Activated T-helper 2 cell treated with anti-CD3 and anti-CD28 coated beads, Interferon-gamma antibody, Interleukin-2, Interleukin-4, amounts not matched to agents 10 μg/mL and 5 μg/mL and 100 μg/mL, durations not matched to agents 14 hours and 24 hours and 36 hours (primary cell): ENCODE measurements at regions of chr3 and their contacts with region 1.

Region 1: GRCh38 chr3:114056130-114057010 is at the starts of genes CCDC191 and QTRT2:
- DNase-seq: peak; percentile 98
- H3K4me3 Mint-ChIP-seq: peak within 1 kb of the TSS; percentile 91
- H3K27ac Mint-ChIP-seq: peak within 1 kb of the TSS; percentile 89
- H3K4me1 Mint-ChIP-seq: peaks cover 22% of the 10 kb centered on the region
- H3K27me3 Mint-ChIP-seq: no peaks in the 10 kb centered on the region
- total RNA-seq, gene CCDC191: 0.68 and 0.76 TPM in 2 replicates
- total RNA-seq, gene QTRT2: 40.2 and 41.3 TPM in 2 replicates

Region 2: GRCh38 chr3:113514265-113514769 is 542.1 kb before region 1 on chr3:
- intact Hi-C with region 1: loop called (anchors 1 kb)
- DNase-seq: no peak
- H3K4me3 Mint-ChIP-seq: no peak overlapping the region
- H3K27ac Mint-ChIP-seq: no peak overlapping the region
- H3K4me1 Mint-ChIP-seq: peaks cover 7% of the 10 kb centered on the region
- H3K27me3 Mint-ChIP-seq: peaks cover 19% of the 10 kb centered on the region

Region 3: GRCh38 chr3:113745273-113746068 is 310.9 kb before region 1 on chr3:
- intact Hi-C with region 1: loop called (anchors 1 kb)
- DNase-seq: peak; percentile 73
- H3K4me3 Mint-ChIP-seq: peak overlapping the region; percentile 96
- H3K27ac Mint-ChIP-seq: peak overlapping the region; percentile 100
- H3K4me1 Mint-ChIP-seq: peaks cover 64% of the 10 kb centered on the region
- H3K27me3 Mint-ChIP-seq: peaks cover 3% of the 10 kb centered on the region

Region 4: DNA sequence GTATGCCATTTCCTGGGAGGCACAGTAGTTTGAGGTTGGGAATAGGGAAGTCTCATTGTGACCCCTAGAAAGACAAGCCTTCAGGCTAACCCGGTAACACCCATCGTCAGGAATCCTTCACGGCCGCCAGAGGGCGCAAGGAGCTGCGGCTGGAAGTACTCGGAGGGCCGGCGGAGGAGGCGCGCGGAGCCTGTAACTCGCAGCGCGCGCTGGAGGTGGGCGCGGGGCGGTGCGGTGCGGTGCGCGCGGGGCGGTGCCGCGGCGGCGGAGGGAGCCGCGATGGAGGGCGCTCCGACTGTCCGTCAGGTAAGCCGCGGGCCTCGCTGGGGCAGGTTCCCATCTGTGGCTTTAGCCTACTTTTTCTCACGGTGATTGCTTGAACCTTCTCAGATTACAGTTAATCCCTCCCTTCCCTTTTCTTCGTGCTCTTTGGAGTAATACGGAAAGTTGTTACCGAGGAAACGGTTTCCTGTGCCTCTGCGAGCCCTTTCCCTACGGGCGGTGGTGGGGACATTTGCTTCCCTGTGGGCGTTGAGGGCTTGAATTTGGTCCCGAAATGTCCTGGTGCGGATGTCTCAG is 217.7 kb before region 1 on chr3 and contains the start of gene GRAMD1C:
- intact Hi-C with region 1: loop called (anchors 2 kb)
- DNase-seq: peak; percentile 77
- H3K4me3 Mint-ChIP-seq: peak within 1 kb of the TSS; percentile 76
- H3K27ac Mint-ChIP-seq: no peak within 1 kb of the TSS
- H3K4me1 Mint-ChIP-seq: peaks cover 8% of the 10 kb centered on the region
- H3K27me3 Mint-ChIP-seq: peaks cover 5% of the 10 kb centered on the region
- total RNA-seq, gene GRAMD1C: 0.37 and 0.87 TPM in 2 replicates

Region 5: DNA sequence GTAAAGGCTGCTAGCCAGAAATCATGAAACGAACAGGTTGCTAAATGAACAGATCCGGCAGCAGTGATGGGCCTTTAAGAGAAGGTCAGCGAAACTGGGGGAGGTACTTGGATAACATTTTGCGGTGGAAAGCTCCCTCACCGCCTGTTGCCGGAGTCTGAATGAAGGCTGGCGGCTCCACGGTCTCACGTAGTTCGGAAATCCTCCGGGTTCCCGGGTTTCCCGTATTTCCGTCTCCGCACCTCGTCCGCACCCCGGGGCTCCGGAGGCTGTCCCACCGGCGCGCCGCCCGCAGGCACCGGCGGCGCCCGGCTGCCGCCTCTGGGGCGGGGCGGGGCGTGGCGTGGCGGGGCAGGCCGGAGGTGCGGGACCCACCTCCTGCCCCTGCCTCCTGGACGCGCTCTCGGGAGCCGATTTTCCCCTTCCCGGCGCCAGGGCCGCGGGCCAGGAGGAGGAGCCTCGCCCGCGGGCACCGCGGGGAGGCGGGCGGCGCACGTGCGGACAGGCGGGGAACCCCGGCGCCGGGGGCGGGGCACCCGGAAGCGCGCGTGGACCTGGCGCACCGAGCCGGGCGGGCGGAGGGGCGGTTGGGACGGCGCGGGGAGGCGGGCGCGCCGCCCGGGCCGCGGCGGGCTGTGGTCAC is 108.9 kb before region 1 on chr3 and contains the start of gene ZDHHC23:
- intact Hi-C with region 1: loop called (anchors 2 kb)
- DNase-seq: peak; percentile 64
- H3K4me3 Mint-ChIP-seq: peak within 1 kb of the TSS; percentile 75
- H3K27ac Mint-ChIP-seq: peak within 1 kb of the TSS; percentile 61
- H3K4me1 Mint-ChIP-seq: peaks cover 7% of the 10 kb centered on the region
- H3K27me3 Mint-ChIP-seq: peaks cover 53% of the 10 kb centered on the region
- total RNA-seq, gene ZDHHC23: 2.6 and 2.9 TPM in 2 replicates

Region 6: DNA sequence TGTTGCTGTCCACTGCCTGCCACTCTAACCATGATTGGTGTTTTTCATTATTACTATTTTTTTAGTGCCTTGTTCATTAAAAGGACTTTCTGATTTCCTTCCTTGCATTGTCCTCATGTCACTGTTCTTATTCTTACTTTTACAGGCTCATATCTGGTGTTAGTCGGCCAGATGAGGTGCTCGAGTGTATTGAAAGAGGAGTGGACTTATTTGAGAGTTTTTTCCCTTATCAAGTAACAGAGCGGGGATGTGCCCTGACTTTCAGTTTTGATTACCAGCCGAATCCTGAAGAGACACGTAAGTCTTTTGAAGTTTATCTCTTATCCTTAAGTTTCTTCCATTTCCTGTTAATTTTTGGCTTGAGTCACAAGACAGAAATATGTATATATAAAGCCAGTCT is 23.4 kb after region 1 on chr3:
- intact Hi-C with region 1: no loop called
- DNase-seq: no peak
- H3K4me3 Mint-ChIP-seq: no peak overlapping the region
- H3K27ac Mint-ChIP-seq: no peak overlapping the region
- H3K4me1 Mint-ChIP-seq: no peaks in the 10 kb centered on the region
- H3K27me3 Mint-ChIP-seq: no peaks in the 10 kb centered on the region